ENCODE measurements at regions of chrX and their contacts with region 1.

Region 1: DNA sequence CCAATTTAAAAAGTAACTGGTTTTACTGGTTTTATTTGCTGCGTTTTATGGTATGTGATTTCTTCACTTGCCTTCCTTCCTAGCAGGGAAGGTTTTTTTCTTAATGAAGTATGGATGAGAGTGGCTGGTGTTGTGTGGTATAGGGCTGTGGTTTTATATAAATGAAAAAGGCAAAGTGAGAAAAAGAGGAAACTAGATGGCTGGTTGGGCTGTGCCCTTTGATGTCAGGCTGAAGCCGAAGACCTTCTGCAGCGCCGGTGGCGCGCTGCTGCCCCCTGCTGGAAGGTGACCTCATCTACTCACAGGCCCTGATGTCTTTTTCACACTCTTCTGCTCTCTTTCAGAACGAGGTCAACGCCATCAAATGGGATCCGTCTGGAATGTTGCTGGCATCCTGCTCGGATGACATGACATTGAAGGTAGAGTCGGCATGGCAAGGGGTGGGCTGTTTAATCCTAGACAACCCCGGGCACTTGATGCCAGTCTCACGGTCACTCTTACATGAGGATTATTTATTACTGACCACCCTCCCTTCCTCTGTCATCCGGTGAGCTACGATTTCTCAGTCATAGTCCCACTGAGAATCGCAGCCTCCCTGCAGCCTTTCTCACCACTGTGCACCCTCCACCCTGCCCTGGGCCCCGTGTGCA is 56.6 kb downstream of the GPR143 start:
- DNase-seq: peak; percentile 75
- H3K4me3 ChIP-seq: no peak overlapping the region
- H3K27ac ChIP-seq: no peak overlapping the region
- H3K4me1 ChIP-seq: peaks cover 0 to 4% (median 2%) of the 10 kb centered on the region in 4 donors
- H3K27me3 ChIP-seq: no peaks in the 10 kb centered on the region
- CTCF ChIP-seq: peak; percentile 72 to 87 (median 73)
- EP300 ChIP-seq: no peak
- POLR2A ChIP-seq: no peak

Region 2: GRCh38 chrX:8815464-8816065 is 893.5 kb before region 1 on chrX:
- in situ Hi-C with region 1: loop called in 1 of 4 experiments (anchors 25 kb)
- intact Hi-C with region 1: no loop called
- DNase-seq: no peak
- H3K4me3 ChIP-seq: no peak overlapping the region
- H3K27ac ChIP-seq: no peak overlapping the region
- H3K4me1 ChIP-seq: no peaks in the 10 kb centered on the region
- H3K27me3 ChIP-seq: no peaks in the 10 kb centered on the region
- CTCF ChIP-seq: peak in 4 of 5 experiments; percentile 50 to 79 (median 57)
- EP300 ChIP-seq: no peak
- POLR2A ChIP-seq: no peak

Region 3: DNA sequence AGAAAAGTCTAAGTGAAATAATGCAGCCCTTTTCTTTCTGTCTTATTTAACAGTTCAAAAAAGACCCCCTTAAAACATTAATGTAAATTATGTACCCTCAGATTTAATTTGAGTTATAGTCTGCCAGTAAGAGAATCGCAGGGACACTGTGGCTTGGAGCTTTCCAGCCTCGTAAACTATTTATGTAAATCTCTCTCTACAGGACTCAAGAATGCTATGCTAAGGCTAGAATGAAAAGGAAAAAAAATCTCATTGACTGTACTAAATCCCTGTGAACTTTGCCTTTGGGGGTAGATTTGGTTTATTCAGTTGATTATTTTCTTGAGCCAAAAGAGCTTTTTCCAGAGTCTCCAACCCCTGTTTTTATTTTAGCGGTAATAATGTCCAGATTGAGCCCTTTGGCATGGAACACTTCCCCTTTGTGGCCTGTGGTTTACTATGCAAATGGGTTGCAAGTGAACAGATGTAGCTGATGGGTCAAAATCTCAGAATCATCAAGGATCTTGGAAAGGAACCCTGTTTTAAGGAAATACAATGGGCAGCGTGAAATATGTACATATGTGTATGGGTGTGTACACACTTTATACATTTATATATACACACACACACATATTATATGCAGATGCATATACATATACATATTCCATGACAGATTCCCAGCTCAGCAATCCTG is 748.1 kb before region 1 on chrX:
- in situ Hi-C with region 1: loop called in 2 of 4 experiments (anchors 10 to 25 kb)
- intact Hi-C with region 1: no loop called
- DNase-seq: no peak
- H3K4me3 ChIP-seq: no peak overlapping the region
- H3K27ac ChIP-seq: no peak overlapping the region
- H3K4me1 ChIP-seq: no peaks in the 10 kb centered on the region
- H3K27me3 ChIP-seq: no peaks in the 10 kb centered on the region
- CTCF ChIP-seq: no peak
- EP300 ChIP-seq: no peak
- POLR2A ChIP-seq: no peak

Region 4: GRCh38 chrX:8971116-8971515 is 737.9 kb before region 1 on chrX:
- in situ Hi-C with region 1: loop called in 3 of 4 experiments (anchors 10 to 25 kb)
- intact Hi-C with region 1: no loop called
- DNase-seq: no peak
- H3K4me3 ChIP-seq: no peak overlapping the region
- H3K27ac ChIP-seq: no peak overlapping the region
- H3K4me1 ChIP-seq: no peaks in the 10 kb centered on the region
- H3K27me3 ChIP-seq: no peaks in the 10 kb centered on the region
- CTCF ChIP-seq: peak; percentile 27 to 53 (median 32)
- EP300 ChIP-seq: no peak
- POLR2A ChIP-seq: no peak

Region 5: GRCh38 chrX:9604111-9604907 is 104.7 kb before region 1 on chrX:
- in situ Hi-C with region 1: no loop called
- intact Hi-C with region 1: no loop called
- DNase-seq: no peak
- H3K4me3 ChIP-seq: no peak overlapping the region
- H3K27ac ChIP-seq: no peak overlapping the region
- H3K4me1 ChIP-seq: no peaks in the 10 kb centered on the region
- H3K27me3 ChIP-seq: no peaks in the 10 kb centered on the region
- CTCF ChIP-seq: no peak
- EP300 ChIP-seq: no peak
- POLR2A ChIP-seq: no peak

Region 6: GRCh38 chrX:9775930-9776329 is 66.9 kb after region 1 on chrX:
- in situ Hi-C with region 1: no loop called
- intact Hi-C with region 1: no loop called
- DNase-seq: no peak
- H3K4me3 ChIP-seq: no peak overlapping the region
- H3K27ac ChIP-seq: no peak overlapping the region
- H3K4me1 ChIP-seq: no peaks in the 10 kb centered on the region
- H3K27me3 ChIP-seq: no peaks in the 10 kb centered on the region
- CTCF ChIP-seq: no peak
- EP300 ChIP-seq: no peak
- POLR2A ChIP-seq: no peak

Measured in transverse colon (tissue), 4 donors.